Activated CD4-positive, alpha-beta T cell treated with anti-CD3 and anti-CD28 coated beads for 36 hours (primary cell): ENCODE measurements at regions of chr10 and their contacts with region 1.

Region 1: DNA sequence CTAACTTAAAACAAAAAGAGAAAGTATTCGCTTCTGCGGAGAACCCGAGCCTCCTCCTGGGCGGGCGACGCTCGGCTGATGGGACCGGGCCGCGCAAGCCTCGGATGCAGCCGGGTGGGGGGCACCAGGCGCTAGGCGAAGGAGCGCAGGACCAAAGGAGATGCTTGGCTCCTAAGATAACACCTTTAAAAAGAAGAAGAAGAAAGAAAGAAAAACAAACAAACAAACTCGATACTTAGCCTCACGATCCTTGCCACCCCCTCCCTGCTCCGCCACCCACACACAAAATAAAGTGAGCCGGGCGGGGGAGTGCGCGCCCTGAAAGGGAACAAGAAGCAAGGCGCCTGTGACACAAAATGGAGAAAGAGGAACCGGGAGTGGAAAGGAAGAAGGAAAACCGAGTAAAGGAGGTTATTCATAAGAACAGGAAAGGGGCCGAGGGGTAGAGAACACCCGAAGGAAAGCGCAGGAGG is 34.0 kb upstream of the EBLN1 start:
- DNase-seq: peak; percentile 83
- ATAC-seq: peak; percentile 42
- H3K4me3 Mint-ChIP-seq: peak overlapping the region; percentile 93
- H3K27ac Mint-ChIP-seq: peak overlapping the region; percentile 100
- H3K4me1 Mint-ChIP-seq: peaks cover 35% of the 10 kb centered on the region
- H3K27me3 Mint-ChIP-seq: peaks cover 5% of the 10 kb centered on the region

Region 2: GRCh38 chr10:21533467-21534279 is 718.1 kb before region 1 on chr10 and contains the start of gene MLLT10:
- CTCF ChIA-PET with region 1: no interaction called
- POLR2A ChIA-PET with region 1: no interaction called
- intact Hi-C with region 1: loop called (anchors 5 kb)
- DNase-seq: peak; percentile 95
- ATAC-seq: peak; percentile 87
- H3K4me3 Mint-ChIP-seq: peak within 1 kb of the TSS; percentile 95
- H3K27ac Mint-ChIP-seq: peak within 1 kb of the TSS; percentile 98
- H3K4me1 Mint-ChIP-seq: peaks cover 18% of the 10 kb centered on the region
- H3K27me3 Mint-ChIP-seq: no peaks in the 10 kb centered on the region
- total RNA-seq, gene MLLT10: 33.8 to 34.1 TPM

Region 3: DNA sequence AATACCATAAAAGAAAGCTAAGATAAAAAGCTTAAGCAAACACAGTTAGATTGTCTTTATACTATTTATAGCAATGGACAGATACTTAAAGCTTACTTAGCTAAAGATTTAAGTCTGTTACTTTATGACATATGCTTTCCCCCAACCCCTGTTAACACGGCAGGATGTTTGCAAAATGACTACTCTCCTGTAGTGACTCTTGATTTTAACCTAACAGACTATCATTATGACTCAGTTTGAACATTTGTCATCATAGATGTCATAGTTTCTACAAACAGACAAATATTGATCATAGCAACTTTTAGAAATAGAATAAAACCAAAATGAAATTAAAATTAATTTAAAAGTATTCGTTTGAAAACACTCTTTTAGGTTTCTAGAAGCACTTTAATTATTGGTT is 56.6 kb after region 1 on chr10:
- CTCF ChIA-PET with region 1: interaction called, 4 read pairs
- POLR2A ChIA-PET with region 1: no interaction called
- intact Hi-C with region 1: loop called (anchors 1 kb)
- DNase-seq: peak; percentile 60
- ATAC-seq: peak; percentile 99
- H3K4me3 Mint-ChIP-seq: no peak overlapping the region
- H3K27ac Mint-ChIP-seq: no peak overlapping the region
- H3K4me1 Mint-ChIP-seq: peaks cover 10% of the 10 kb centered on the region
- H3K27me3 Mint-ChIP-seq: peaks cover 3% of the 10 kb centered on the region

Region 4: GRCh38 chr10:22316285-22317120 is 64.7 kb after region 1 on chr10 and contains the start of gene COMMD3:
- CTCF ChIA-PET with region 1: interaction called, 4 read pairs
- POLR2A ChIA-PET with region 1: no interaction called
- intact Hi-C with region 1: loop called in 1 of 2 experiments (anchors 1 kb)
- DNase-seq: peak; percentile 88
- ATAC-seq: peak; percentile 72
- H3K4me3 Mint-ChIP-seq: peak within 1 kb of the TSS; percentile 94
- H3K27ac Mint-ChIP-seq: peak within 1 kb of the TSS; percentile 97
- H3K4me1 Mint-ChIP-seq: peaks cover 38% of the 10 kb centered on the region
- H3K27me3 Mint-ChIP-seq: peaks cover 7% of the 10 kb centered on the region
- total RNA-seq, gene COMMD3: 53.8 to 77.1 TPM

Region 5: DNA sequence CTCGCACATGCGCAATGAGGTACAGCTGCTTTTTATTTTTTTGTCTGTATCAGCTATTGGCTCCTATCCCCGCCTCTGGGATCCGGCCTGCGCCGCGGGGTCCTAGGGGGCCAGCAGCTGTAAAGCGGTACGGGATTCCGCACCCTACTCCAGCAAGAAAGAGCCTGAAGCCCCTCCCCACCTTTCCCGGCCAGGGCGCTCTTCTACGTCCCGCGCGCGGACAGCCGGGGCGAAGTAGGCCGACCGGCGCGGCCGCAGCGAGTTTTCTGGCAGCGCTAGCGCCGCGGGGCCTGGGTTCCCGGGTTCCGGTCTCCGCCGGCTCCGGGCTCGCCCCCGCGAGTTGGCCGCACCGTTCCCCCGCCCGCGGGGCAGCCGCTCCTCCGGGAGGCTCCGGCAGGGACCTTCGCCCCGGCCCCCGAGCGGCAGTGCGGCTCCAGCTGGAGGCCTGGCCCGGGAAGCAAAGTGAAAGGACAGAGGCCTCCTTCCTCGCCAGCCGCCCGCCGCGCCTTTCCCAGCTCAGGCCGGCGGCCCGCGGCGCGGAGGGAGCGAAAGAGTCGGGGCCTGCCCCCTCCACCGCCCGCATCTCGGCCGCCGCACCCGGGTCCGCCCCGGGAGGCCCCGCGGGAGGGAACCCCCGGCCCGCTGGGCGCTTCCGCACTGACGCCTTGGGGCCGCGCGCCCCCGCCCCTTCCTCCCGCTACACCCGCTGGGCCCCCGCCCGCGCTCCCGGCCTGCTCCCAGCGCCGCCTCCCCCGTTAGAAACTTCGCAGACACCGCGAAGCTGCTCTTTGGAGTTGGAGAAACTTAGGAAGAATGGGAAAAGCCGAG is 88.8 kb after region 1 on chr10:
- CTCF ChIA-PET with region 1: interaction called, 4 read pairs
- POLR2A ChIA-PET with region 1: no interaction called
- intact Hi-C with region 1: loop called in 1 of 2 experiments (anchors 2 kb)
- DNase-seq: peak; percentile 72
- ATAC-seq: peak; percentile 48
- H3K4me3 Mint-ChIP-seq: peak overlapping the region; percentile 78
- H3K27ac Mint-ChIP-seq: peak overlapping the region; percentile 89
- H3K4me1 Mint-ChIP-seq: peaks cover 34% of the 10 kb centered on the region
- H3K27me3 Mint-ChIP-seq: peaks cover 58% of the 10 kb centered on the region

Region 6: DNA sequence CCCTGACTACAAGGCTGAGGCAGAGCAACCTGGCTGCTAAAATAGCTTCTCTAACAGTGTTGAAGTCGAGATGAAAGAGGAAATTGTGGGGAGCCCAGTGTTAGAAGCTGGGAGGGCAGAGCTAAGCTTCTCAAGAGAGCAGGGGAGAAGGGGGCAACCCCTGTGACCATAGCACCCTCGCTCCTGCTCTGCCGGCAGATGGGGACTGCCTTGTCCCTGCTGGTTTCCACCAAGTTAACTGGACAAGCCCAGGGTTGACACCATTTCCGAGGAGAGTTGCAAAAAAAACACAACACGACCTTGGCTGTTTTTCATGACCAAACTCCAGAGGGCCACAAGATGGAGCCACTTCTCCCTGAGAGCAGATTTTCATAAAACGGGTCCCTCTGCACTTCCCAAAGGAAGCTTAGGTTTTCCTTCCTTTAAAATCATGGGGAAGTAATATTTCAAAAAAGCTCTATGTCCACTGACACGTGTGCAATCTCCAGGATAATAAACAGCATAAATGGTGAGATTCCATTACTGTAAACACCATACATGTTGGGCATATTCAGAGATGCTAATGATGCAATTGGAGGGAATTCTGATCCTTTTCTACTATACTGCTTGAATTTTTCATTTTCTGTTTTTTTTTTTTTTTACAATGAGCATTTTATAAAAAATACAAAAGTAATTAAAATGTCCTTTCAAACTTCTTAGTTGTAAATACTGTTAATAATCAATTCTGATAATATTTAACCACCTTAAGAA is 322.2 kb after region 1 on chr10:
- CTCF ChIA-PET with region 1: no interaction called
- POLR2A ChIA-PET with region 1: no interaction called
- intact Hi-C with region 1: loop called (anchors 2 to 5 kb)
- DNase-seq: peak; percentile 37
- ATAC-seq: no peak
- H3K4me3 Mint-ChIP-seq: no peak overlapping the region
- H3K27ac Mint-ChIP-seq: no peak overlapping the region
- H3K4me1 Mint-ChIP-seq: peaks cover 46% of the 10 kb centered on the region
- H3K27me3 Mint-ChIP-seq: no peaks in the 10 kb centered on the region

Region 7: DNA sequence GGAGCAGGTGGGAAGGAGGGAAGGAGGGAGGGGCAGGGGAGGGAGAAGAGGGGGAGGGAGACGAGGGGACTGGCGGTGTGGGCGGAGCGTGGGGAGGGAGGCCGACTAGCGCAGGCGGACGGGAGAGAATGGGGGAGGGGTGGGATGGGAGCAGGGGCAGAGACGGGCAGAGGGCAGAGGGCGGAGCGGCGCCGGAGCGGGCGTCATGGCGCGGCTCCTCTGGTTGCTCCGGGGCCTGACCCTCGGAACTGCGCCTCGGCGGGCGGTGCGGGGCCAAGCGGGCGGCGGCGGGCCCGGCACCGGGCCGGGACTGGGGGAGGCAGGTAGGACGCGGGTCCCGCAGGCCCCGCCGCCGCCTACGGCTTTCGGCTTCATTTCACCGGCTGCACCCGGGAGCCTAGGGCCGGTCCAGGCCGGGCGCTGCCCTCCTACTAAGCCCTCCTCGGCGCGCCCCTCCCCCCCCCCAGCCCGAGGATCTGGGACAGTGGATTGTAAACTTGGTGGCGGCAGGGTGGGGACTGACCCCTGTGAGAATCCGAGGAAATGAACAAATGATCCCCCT is 843.7 kb after region 1 on chr10 and contains the start of gene MSRB2:
- CTCF ChIA-PET with region 1: no interaction called
- POLR2A ChIA-PET with region 1: no interaction called
- intact Hi-C with region 1: loop called in 1 of 2 experiments (anchors 5 kb)
- DNase-seq: peak; percentile 84
- ATAC-seq: peak; percentile 58
- H3K4me3 Mint-ChIP-seq: peak within 1 kb of the TSS; percentile 95
- H3K27ac Mint-ChIP-seq: peak within 1 kb of the TSS; percentile 92
- H3K4me1 Mint-ChIP-seq: peaks cover 39% of the 10 kb centered on the region
- H3K27me3 Mint-ChIP-seq: no peaks in the 10 kb centered on the region
- total RNA-seq, gene MSRB2: 8.2 to 9.0 TPM